ENCODE measurements at regions of chr3 and their contacts with region 1.

Region 1: GRCh38 chr3:167734498-167735232 is at the start of gene PDCD10:
- DNase-seq: peak; percentile 98
- ATAC-seq: peak; percentile 88
- H3K4me3 Mint-ChIP-seq: no peak within 1 kb of the TSS
- H3K27ac Mint-ChIP-seq: no peak within 1 kb of the TSS
- H3K4me1 Mint-ChIP-seq: peaks cover 37% of the 10 kb centered on the region
- H3K27me3 Mint-ChIP-seq: no peaks in the 10 kb centered on the region
- total RNA-seq, gene PDCD10: 95.4 to 118 TPM

Region 2: GRCh38 chr3:167380004-167380689 is 354.5 kb before region 1 on chr3 and contains the start of gene ZBBX:
- CTCF ChIA-PET with region 1: interaction called, 3 read pairs
- POLR2A ChIA-PET with region 1: no interaction called
- intact Hi-C with region 1: loop called (anchors 2 to 5 kb)
- DNase-seq: peak; percentile 91
- ATAC-seq: peak; percentile 95
- H3K4me3 Mint-ChIP-seq: peak within 1 kb of the TSS; percentile 71
- H3K27ac Mint-ChIP-seq: peak within 1 kb of the TSS; percentile 59
- H3K4me1 Mint-ChIP-seq: peaks cover 11% of the 10 kb centered on the region
- H3K27me3 Mint-ChIP-seq: peaks cover 9% of the 10 kb centered on the region
- total RNA-seq, gene ZBBX: not detected

Region 3: DNA sequence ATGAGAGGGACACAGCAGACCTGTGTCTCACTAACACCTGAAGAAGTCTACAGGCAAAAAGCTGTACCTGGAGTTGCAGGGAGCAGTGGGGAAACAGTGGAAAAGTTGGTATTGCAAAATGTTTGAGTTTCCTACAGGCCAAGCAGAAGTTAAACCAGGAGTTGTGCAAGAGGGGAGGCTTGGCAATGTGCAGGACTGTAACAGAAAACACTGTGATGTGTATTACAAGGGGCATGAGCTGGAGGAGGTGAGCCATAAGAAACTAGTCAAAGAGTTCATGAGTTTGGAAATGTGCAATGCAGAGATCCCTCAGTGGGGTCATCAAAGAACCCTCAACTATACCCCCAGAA is 213.7 kb before region 1 on chr3:
- CTCF ChIA-PET with region 1: no interaction called
- POLR2A ChIA-PET with region 1: no interaction called
- intact Hi-C with region 1: no loop called
- DNase-seq: no peak
- ATAC-seq: no peak
- H3K4me3 Mint-ChIP-seq: no peak overlapping the region
- H3K27ac Mint-ChIP-seq: no peak overlapping the region
- H3K4me1 Mint-ChIP-seq: no peaks in the 10 kb centered on the region
- H3K27me3 Mint-ChIP-seq: no peaks in the 10 kb centered on the region

Region 4: DNA sequence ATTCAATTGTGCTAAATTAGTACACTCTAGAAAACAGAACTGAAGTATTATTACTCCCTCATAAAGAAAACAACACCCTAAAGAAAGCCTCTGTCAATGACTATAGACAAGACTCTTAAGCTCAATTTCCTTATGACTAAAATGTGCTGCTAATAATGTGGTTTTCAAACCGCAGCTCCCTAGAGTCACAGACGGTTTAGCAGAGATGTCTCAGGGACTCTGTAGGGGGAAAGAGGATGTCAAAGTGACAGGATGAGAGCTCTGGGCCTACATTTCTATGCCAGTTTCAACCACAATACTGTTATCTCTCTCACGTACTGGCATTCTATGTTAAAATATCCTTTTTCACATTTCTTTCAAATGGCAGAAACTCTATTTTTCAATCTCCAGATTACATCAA is 43.3 kb before region 1 on chr3:
- CTCF ChIA-PET with region 1: interaction called, 3 read pairs
- POLR2A ChIA-PET with region 1: no interaction called
- intact Hi-C with region 1: loop called (anchors 2 kb)
- DNase-seq: peak; percentile 47
- ATAC-seq: peak; percentile 99
- H3K4me3 Mint-ChIP-seq: no peak overlapping the region
- H3K27ac Mint-ChIP-seq: no peak overlapping the region
- H3K4me1 Mint-ChIP-seq: peaks cover 38% of the 10 kb centered on the region
- H3K27me3 Mint-ChIP-seq: no peaks in the 10 kb centered on the region

Region 5: GRCh38 chr3:167716920-167717319 is 17.7 kb before region 1 on chr3:
- CTCF ChIA-PET with region 1: interaction called, 9 read pairs
- POLR2A ChIA-PET with region 1: no interaction called
- intact Hi-C with region 1: loop called in 1 of 2 experiments (anchors 2 kb)
- DNase-seq: no peak
- ATAC-seq: no peak
- H3K4me3 Mint-ChIP-seq: no peak overlapping the region
- H3K27ac Mint-ChIP-seq: no peak overlapping the region
- H3K4me1 Mint-ChIP-seq: peaks cover 52% of the 10 kb centered on the region
- H3K27me3 Mint-ChIP-seq: no peaks in the 10 kb centered on the region

Region 6: GRCh38 chr3:168095611-168096209 is 361.0 kb after region 1 on chr3 and contains the start of gene GOLIM4:
- CTCF ChIA-PET with region 1: no interaction called
- POLR2A ChIA-PET with region 1: no interaction called
- intact Hi-C with region 1: loop called (anchors 5 to 10 kb)
- DNase-seq: peak; percentile 75
- ATAC-seq: peak; percentile 81
- H3K4me3 Mint-ChIP-seq: peak within 1 kb of the TSS; percentile 75
- H3K27ac Mint-ChIP-seq: peak within 1 kb of the TSS; percentile 66
- H3K4me1 Mint-ChIP-seq: peaks cover 10% of the 10 kb centered on the region
- H3K27me3 Mint-ChIP-seq: peaks cover 39% of the 10 kb centered on the region
- total RNA-seq, gene GOLIM4: 3.2 to 4.1 TPM